ENCODE measurements at regions of chrX and their contacts with region 1.

Region 1: GRCh38 chrX:2707334-2707760 is 16.3 kb downstream of the CD99 start:
- DNase-seq: peak in 4 of 5 donors; percentile 53 to 70 (median 60)
- ATAC-seq: peak; percentile 7 to 40 (median 32)
- H3K4me3 ChIP-seq: peak overlapping the region in 2 of 12 donors; percentile 15 to 21
- H3K27ac ChIP-seq: peak overlapping the region in 8 of 12 donors; percentile 3 to 73 (median 32)
- H3K4me1 ChIP-seq: peaks cover 24 to 92% (median 79%) of the 10 kb centered on the region in 12 donors
- H3K27me3 ChIP-seq: no peaks in the 10 kb centered on the region
- CTCF ChIP-seq: peak in 1 of 12 donors; percentile 5
- POLR2A ChIP-seq: no peak

Region 2: DNA sequence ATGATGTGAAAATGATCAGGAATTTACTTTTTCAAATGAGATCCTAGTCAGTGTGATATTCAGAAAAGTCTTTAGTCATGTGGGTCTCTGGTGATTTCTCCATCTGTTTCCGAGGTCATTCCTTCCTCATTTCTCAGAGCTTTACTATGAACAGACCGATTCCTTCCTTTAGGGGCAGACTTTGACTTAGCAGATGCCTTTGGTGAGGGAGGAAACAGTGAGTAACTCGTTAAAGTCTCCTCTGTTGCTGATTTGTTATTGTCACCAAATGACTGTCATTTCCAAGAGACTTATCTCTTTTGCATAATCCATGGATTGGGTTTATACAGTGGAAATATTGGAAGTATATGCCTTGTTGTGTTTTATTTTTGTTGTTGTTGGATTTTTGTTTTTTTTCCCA is 92.4 kb before region 1 on chrX:
- intact Hi-C with region 1: loop called in 2 of 10 experiments (anchors 10 kb)
- DNase-seq: peak in 1 of 5 donors; percentile 12
- ATAC-seq: peak; percentile 64 to 90 (median 80)
- H3K4me3 ChIP-seq: no peak overlapping the region
- H3K27ac ChIP-seq: peak overlapping the region in 3 of 12 donors; percentile 31 to 73 (median 38)
- H3K4me1 ChIP-seq: peaks cover 0 to 21% (median 0%) of the 10 kb centered on the region in 12 donors
- H3K27me3 ChIP-seq: no peaks in the 10 kb centered on the region
- CTCF ChIP-seq: peak in 6 of 12 donors; percentile 11 to 59 (median 47)
- POLR2A ChIP-seq: no peak

Region 3: GRCh38 chrX:2690856-2691542 is 16.3 kb before region 1 on chrX and contains the start of gene CD99:
- intact Hi-C with region 1: loop called in 1 of 10 experiments (anchors 2 kb)
- DNase-seq: peak; percentile 93 to 97 (median 95)
- ATAC-seq: peak; percentile 89 to 98 (median 95)
- H3K4me3 ChIP-seq: peak within 1 kb of the TSS; percentile 72 to 100 (median 96)
- H3K27ac ChIP-seq: peak within 1 kb of the TSS; percentile 71 to 96 (median 91)
- H3K4me1 ChIP-seq: peaks cover 9 to 47% (median 35%) of the 10 kb centered on the region in 12 donors
- H3K27me3 ChIP-seq: no peaks in the 10 kb centered on the region
- CTCF ChIP-seq: no peak
- POLR2A ChIP-seq: peak in 1 of 2 donors; percentile 76
- total RNA-seq, gene CD99: 216 to 475 (median 264) TPM

Region 4: DNA sequence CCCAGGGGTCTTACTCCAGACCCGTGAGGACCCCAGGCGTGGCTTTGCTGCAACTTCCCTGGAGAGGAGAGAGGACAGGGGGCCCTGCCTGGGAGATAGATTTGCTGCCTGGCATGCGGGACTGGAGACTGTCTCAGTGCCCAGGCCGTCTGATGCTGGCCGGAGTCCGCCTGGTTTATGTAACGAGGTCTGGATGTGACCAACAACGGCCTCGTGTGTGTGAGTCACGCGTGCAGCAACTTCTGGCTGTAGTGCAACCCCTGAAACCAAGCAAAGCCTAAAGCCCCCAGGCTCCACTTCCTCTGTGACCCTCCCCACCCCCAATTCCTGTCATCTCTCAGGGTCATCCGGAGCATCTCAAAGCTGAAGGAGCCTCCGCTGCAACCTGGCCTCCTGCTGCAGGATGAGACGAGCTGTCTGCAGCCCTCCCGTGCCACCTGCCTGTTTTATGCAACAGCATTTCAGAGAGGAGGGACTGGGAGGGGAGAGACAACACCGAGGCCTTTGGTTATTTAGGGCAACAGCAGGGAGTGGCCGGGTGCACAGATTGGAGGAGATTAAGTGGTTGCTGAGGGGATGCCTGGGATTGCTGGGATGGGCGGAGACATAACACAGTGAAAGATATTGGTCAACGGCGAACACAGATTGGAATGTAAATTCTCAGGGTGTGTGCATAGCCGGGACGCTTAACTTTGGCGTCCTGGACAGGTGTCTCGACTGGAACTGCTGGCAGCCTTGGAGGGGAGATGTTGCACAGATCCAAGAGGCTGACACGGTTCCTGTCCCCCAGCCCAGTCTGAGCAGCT is 60.5 kb after region 1 on chrX:
- intact Hi-C with region 1: loop called in 1 of 10 experiments (anchors 10 kb)
- DNase-seq: peak in 4 of 5 donors; percentile 38 to 60 (median 48)
- ATAC-seq: peak; percentile 75 to 94 (median 80)
- H3K4me3 ChIP-seq: no peak overlapping the region
- H3K27ac ChIP-seq: no peak overlapping the region
- H3K4me1 ChIP-seq: peaks cover 0 to 10% (median 0%) of the 10 kb centered on the region in 12 donors
- H3K27me3 ChIP-seq: no peaks in the 10 kb centered on the region
- CTCF ChIP-seq: no peak
- POLR2A ChIP-seq: no peak

Region 5: GRCh38 chrX:2819345-2820135 is 112.2 kb after region 1 on chrX:
- intact Hi-C with region 1: loop called in 2 of 10 experiments (anchors 5 to 10 kb)
- DNase-seq: no peak
- ATAC-seq: no peak
- H3K4me3 ChIP-seq: no peak overlapping the region
- H3K27ac ChIP-seq: no peak overlapping the region
- H3K4me1 ChIP-seq: no peaks in the 10 kb centered on the region
- H3K27me3 ChIP-seq: peaks cover 0 to 6% (median 0%) of the 10 kb centered on the region in 9 donors
- CTCF ChIP-seq: peak; percentile 13 to 54 (median 40)
- POLR2A ChIP-seq: no peak

Region 6: DNA sequence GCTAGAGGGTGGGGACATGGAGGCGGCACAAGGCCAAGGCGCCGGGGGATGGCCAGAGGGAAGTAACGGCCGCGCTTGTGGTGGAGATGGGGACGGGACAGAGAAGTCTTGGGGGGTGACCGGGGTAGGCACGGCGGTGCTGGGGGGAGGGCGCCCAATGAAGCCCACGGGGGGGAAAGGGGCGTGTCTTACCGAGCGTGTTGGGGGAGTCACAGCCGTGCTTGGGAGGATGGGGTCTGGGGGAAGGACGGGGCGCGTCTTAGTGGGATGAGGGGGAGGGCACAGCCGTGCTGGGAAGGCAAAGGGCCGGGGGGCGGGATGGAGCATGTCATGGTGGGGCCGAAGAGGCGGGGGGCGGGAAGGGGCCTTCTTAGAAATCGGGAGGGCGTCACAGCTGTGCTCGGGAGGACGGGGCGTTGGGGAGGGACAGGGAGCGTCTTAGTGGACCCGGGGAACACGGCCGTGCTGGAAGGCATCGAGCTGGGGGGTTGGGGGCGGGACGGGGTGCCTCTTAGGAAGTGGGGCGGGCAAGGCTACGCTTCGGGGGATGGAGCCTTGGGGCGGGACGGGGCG is 220.9 kb after region 1 on chrX:
- intact Hi-C with region 1: loop called in 1 of 10 experiments (anchors 10 kb)
- DNase-seq: peak; percentile 38 to 75 (median 66)
- ATAC-seq: peak; percentile 27 to 47 (median 42)
- H3K4me3 ChIP-seq: peak overlapping the region; percentile 46 to 99 (median 67)
- H3K27ac ChIP-seq: peak overlapping the region in 11 of 12 donors; percentile 33 to 100 (median 94)
- H3K4me1 ChIP-seq: peaks cover 0 to 7% (median 0%) of the 10 kb centered on the region in 12 donors
- H3K27me3 ChIP-seq: no peaks in the 10 kb centered on the region
- CTCF ChIP-seq: no peak
- POLR2A ChIP-seq: no peak